Activated naive CD8-positive, alpha-beta T cell treated with anti-CD3 and anti-CD28 coated beads, Interleukin-2, amount 10 ng/mL, durations not matched to agents 7 days and 5 days (primary cell): ENCODE measurements at regions of chr16 and their contacts with region 1.

Region 1: DNA sequence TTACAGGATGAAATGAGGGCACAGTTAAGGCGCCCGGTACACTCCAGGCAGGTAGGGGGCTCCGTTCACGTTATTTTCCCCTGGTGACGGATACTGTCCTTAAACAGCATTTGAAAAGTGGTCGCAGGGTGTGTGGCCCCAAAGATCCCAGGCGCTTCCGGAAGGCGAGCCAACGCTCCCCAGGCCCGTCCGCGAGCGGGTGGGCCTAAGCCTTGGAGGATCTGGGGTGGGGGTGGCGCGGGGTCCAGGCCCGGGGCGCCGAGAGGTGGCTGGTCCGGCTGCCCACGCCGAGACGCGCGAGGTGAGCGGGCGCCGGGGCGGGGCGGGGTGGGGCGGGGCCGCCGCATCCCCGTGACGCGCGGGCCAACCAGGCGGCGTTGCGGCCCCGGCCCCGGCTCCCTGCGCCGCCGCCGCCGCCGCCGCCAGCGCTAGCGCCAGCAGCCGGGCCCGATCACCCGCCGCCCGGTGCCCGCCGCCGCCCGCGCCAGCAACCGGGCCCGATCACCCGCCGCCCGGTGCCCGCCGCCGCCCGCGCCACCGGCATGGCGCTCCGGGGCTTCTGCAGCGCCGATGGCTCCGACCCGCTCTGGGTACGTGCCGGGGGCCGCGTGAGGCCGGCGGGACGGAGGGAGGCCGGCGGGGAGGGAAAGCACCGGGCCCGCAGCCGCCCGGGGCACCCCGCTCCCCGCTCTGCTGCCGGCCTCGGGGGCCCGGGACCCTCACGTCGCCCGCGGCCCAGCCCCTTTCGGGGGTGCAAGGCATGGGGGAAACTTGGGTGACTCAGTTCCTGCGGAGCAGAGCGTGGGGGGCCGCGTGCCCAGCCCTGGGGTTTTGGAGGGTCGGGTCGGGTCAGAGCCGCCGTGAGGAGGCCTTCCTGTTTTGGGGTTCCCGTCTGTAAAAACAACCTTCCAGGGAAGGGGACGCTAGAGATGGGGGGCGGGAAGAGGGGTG is at the start of gene ABCC1:
- DNase-seq: peak; percentile 69
- ATAC-seq: peak; percentile 71
- H3K4me3 Mint-ChIP-seq: peak within 1 kb of the TSS; percentile 90
- H3K27ac Mint-ChIP-seq: peak within 1 kb of the TSS; percentile 97
- H3K4me1 Mint-ChIP-seq: peaks cover 32% of the 10 kb centered on the region
- H3K27me3 Mint-ChIP-seq: no peaks in the 10 kb centered on the region
- total RNA-seq, gene ABCC1: 55.2 to 62.5 TPM

Region 2: GRCh38 chr16:15960124-15960971 is 10.9 kb after region 1 on chr16:
- POLR2A ChIA-PET with region 1: interaction called, 14 read pairs
- DNase-seq: no peak
- ATAC-seq: no peak
- H3K4me3 Mint-ChIP-seq: peak overlapping the region; percentile 84
- H3K27ac Mint-ChIP-seq: peak overlapping the region; percentile 92
- H3K4me1 Mint-ChIP-seq: peaks cover 58% of the 10 kb centered on the region
- H3K27me3 Mint-ChIP-seq: no peaks in the 10 kb centered on the region

Region 3: GRCh38 chr16:15996432-15997109 is 47.1 kb after region 1 on chr16:
- POLR2A ChIA-PET with region 1: no interaction called
- DNase-seq: no peak
- ATAC-seq: no peak
- H3K4me3 Mint-ChIP-seq: no peak overlapping the region
- H3K27ac Mint-ChIP-seq: no peak overlapping the region
- H3K4me1 Mint-ChIP-seq: peaks cover 13% of the 10 kb centered on the region
- H3K27me3 Mint-ChIP-seq: no peaks in the 10 kb centered on the region

Region 4: GRCh38 chr16:16052916-16053315 is 103.4 kb after region 1 on chr16:
- POLR2A ChIA-PET with region 1: no interaction called
- DNase-seq: no peak
- ATAC-seq: no peak
- H3K4me3 Mint-ChIP-seq: no peak overlapping the region
- H3K27ac Mint-ChIP-seq: no peak overlapping the region
- H3K4me1 Mint-ChIP-seq: no peaks in the 10 kb centered on the region
- H3K27me3 Mint-ChIP-seq: no peaks in the 10 kb centered on the region